ENCODE measurements at regions of chr5 and their contacts with region 1.

Region 1: DNA sequence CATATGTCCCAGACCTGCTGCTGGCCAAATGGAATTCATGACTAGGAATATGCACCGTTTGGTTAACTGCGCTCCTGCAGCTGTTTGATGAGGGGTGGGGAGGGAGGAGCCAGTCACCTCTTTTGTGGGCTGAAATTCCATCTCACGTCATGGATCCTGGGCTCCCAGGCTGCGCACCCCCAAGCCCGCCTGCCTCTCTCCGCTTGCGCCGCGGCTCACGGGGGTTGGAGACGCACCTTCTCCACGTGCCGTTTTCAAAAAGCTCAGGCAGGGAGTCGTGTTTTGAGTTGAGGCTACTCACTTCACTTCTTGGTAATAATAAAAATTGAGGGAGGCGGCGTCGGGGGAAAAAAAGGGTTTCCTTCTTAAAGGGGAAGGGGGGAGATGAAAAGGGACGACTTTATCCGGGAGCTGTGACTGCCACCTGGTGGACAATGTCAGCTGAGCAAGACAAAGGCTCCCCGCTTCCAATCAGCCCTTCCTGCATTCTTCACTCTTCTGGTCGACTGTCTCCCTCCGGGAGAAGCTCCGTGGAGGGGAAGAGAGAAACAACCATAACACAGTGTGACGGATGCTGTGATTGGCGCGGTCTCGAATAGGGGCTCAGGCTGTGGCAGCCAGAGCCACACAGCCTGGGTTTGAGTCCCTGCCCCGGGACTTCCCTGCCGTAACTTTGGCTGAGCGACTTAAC is 15.9 kb upstream of the C5orf47 start:
- DNase-seq: peak; percentile 85

Region 2: DNA sequence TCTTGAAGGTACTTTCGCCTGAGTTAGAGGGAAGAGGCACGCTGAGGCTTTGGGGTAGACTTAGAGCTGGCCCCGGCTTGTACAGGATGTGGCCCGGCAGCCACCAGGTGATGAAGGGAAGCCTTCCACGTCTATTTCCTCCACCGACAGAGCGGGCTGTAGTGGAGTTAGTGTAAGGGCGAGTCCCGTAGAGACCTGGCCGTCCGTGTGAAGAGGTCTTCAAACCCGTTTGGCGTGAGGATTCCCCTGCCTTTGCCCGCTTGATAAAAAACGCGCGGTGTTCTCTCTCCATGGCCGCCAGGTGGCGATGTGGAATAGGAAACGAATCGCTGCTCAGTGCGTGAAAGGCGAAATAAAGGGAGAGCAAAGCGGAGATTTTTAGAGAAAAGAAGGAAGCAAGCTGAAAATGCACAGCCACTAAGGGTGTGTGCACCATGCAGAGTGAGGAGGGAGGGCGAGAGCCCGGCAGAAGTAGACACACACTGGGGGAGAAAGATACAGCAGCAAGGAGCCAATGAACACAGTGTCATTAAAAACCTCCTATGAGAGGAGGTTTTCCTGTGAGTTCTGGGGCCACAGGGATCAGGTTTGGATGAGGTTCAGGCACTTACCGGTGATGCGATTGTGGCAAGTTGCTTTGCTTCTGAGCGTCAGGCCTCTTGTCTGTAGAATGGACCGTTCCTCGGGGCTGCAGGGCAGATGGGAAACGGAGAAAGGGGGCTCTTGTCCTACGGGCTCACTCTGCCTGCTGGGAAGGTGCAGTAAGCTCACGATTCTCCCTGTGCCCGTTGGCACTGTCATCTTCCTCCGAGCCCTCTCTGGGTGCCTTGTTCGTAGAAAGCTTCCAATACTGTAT is 679.0 kb before region 1 on chr5:
- intact Hi-C with region 1: loop called (anchors 10 kb)
- DNase-seq: no peak

Region 3: DNA sequence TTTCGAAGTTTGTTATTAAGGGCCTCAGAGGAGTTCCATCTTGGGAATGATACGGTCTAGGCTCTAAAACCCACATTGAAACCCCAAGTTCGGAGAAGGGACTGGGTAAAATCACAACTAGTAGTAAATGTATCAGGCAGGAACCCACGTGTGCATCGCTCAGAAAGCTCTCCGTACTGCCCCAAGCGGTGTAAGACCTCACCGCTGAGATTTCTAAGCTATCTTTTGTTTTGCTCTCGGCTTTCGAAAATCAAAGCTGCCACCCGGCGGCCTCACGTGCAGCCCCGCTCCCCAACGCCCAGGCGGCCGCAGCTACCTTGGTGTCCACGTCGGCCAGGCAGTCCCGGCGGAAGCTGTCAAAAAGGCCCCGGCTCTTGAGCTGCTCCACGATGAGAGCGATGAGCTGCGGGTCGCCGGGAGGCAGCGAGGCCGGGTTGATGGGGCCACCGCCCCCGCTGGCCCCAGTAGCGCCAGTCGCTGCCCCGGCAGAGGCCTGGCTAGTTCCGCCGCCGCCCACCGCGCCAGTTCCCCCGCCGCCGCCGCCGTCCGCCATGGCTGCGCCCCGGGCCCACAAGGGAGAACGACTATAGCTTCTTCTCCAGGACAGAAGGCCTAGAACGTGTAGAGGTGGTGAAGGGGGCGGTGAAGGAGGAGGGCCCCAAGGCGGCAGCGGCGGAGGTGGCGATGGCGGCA is 357.0 kb before region 1 on chr5:
- intact Hi-C with region 1: loop called (anchors 1 kb)
- DNase-seq: peak; percentile 78

Region 4: DNA sequence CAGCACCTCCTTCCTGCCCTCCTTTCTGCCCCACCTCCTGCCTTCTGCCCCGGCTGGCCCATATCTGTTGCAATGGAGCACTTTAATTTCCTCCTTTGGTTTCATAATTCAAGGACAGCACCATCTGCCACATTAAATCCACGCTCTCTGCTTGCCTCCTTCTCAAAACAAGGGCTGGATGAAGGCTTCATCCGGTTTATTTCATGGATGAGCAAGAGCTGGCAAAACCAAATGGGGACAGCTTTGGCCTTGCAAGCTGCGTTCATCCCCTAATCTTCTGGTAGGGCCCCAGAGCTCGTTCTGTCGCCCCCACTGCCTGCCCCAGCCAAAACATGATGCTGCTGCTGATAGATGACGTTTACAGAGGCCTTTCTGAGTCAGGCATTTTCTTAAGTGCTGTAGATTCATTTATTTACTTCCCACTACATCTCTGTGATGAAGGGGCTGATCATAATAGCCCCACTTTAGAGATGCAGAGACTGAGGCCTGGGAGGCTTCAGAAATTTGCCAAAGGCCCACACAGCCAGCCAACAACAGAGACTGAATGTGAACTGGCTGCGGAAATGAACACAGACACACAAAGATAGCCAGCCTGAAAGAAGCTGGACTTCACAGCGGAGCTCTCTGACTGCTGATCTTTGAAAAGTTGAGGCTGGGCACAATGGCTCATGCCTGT is 200.5 kb before region 1 on chr5:
- intact Hi-C with region 1: loop called (anchors 2 kb)
- DNase-seq: no peak

Region 5: DNA sequence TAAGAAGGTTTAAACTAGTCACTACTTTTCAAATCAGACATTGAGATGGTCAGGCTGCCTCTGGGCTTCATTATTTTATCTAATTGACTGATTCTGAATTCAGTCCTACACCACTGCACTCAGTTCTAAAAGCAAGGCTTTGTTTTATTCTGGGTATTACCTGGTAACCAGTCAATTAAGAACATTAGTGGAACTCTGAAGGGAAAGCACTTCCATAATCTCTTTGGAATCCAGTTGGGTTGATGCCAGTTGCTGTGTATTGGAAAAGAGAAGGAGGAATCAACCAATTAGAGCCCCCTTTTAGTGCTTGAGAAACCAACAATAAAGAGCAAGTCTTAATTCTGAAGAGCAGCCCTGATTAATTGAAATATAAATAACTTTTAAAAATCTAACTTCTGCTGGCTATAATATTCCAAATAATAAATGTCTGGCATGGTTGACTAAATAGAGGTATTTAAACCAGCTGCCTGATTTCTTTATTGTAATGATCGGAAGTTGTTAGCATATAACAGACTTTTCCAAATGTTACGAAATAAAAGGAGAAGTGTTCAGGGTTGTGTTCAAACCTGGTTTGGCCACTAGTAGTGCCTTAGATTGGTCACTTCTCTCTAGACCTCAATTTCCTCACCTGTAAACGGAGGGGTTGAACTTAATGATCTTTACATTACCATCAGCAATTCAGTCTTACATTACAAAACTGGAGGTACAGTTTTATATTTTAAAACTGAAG is 52.9 kb before region 1 on chr5:
- intact Hi-C with region 1: loop called (anchors 5 kb)
- DNase-seq: no peak